Heart left ventricle (tissue), 16 donors: ENCODE measurements at regions of chr15 and their contacts with region 1.

Region 1: GRCh38 chr15:30023798-30024295 is 58.9 kb upstream of the GOLGA8J start:
- DNase-seq: no peak
- ATAC-seq: no peak
- H3K4me3 ChIP-seq: no peak overlapping the region
- H3K27ac ChIP-seq: no peak overlapping the region
- H3K4me1 ChIP-seq: no peaks in the 10 kb centered on the region
- H3K27me3 ChIP-seq: peaks cover 0 to 17% (median 0%) of the 10 kb centered on the region in 9 donors
- CTCF ChIP-seq: no peak
- POLR2A ChIP-seq: no peak

Region 2: DNA sequence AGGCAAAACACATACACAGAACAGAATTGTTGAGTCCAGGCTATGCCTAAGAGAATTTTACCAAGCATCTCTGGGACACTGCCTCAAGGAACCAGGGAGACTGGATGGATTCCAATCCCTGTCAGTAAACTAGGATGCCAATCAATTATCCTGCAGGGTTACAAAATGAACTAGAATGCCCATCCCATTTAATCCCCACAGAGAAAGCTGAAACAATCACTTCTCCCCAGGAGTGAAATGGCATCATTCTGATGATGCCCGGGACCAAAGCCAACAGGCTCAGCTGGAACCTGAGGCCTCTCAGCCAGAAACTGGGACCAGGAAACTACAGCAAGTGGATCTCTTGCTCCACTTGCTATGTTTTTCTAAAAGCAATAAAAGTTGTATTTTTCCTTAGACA is 71.6 kb before region 1 on chr15:
- intact Hi-C with region 1: loop called in 1 of 10 experiments (anchors 10 kb)
- DNase-seq: no peak
- ATAC-seq: no peak
- H3K4me3 ChIP-seq: no peak overlapping the region
- H3K27ac ChIP-seq: no peak overlapping the region
- H3K4me1 ChIP-seq: no peaks in the 10 kb centered on the region
- H3K27me3 ChIP-seq: no peaks in the 10 kb centered on the region
- CTCF ChIP-seq: no peak
- POLR2A ChIP-seq: no peak

Region 3: DNA sequence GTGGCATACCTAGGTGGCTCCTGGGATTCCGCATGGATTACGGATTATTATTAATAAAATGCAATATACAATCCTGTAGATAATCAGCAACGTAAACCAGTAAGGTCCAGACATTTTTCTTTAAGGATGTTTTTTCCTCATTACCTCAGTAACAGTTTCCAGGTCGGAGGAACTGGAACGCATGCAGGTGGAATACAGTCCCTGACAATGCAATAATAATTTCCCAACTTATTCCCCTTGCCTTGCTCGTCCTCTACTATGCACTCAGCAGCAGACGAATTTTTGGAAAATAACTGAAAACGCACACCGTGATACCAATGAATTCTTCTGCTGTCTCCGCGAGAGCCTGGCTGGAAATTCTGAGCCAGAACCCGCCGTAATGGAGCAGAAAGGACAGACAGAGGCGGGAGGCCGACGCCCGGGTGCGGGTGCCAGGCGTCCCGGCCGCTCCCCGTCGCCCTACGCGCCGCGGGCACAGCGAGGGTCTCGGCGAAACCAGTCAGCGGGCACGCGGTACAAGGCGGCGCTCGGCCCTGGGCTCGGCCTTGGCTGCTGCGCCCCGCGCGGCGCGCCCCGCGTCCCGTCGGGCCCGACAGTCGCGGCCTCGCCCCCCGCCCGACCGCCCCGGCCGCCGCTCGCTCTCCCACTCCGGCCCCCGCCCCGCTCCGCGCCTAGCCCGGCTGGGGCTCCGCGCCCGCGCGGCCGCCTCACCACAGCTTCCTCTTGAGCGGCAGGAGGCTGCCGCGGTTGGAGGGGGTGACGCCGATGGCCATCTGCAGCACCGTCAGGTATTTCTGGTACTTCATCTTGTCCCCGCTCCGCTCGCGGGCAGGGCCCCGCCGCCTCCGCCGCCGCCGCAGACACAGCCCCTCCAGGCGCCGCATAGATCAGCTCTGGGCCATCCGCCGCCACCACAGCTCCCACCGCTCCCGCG is 55.6 kb before region 1 on chr15:
- intact Hi-C with region 1: loop called in 2 of 10 experiments (anchors 10 kb)
- DNase-seq: no peak
- ATAC-seq: peak in 2 of 4 donors; percentile 20 to 47
- H3K4me3 ChIP-seq: peak overlapping the region in 11 of 12 donors; percentile 18 to 54 (median 44)
- H3K27ac ChIP-seq: no peak overlapping the region
- H3K4me1 ChIP-seq: peaks cover 0 to 9% (median 0%) of the 10 kb centered on the region in 12 donors
- H3K27me3 ChIP-seq: peaks cover 2 to 54% (median 16%) of the 10 kb centered on the region in 9 donors
- CTCF ChIP-seq: no peak
- POLR2A ChIP-seq: no peak

Region 4: DNA sequence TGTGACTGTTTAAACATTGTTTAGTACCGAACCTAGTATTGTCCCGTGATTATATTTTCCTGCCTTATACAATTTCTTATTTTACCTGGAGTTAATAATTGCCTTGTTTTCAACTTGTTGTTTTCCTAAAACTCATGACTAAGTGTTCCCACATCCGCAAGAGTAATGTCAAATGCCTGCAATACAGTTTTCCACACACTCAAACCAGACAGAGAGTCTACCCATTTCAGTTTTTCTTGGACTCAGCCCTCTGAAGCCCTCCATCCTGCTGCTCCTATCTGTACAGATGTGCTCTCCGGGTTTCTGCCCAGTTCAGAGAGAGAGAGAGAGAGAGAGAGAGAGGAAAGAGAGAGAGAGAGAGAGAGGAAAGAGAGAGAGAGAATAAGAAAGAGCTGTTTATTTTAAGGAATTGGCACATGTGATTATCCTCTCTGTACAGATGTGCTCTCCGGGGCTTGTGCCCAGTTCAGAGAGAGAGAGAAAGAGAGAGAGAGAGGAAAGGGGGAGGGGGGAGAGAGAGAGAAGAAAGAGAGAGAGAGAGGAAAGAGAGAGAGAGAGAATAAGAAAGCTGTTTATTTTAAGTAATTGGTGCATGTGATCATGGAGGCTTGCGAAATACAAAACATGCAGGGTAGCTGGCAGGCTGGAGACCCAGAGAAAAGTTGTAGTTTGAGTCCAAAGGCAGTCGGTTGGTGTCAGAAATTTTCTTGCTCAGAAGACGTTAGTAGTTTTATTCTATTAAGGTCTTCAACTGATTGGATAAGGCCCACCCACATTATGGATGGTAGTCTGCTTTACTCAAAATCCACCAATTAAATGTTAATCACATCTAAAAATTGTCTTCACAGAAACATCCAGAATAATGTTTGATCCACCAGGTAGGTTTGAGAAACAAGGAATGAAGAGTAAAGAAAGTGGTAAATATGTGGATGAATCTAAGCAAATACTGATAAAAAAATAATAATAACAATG is 45.1 kb before region 1 on chr15:
- intact Hi-C with region 1: loop called in 1 of 10 experiments (anchors 10 kb)
- DNase-seq: no peak
- ATAC-seq: peak; percentile 16 to 61 (median 32)
- H3K4me3 ChIP-seq: no peak overlapping the region
- H3K27ac ChIP-seq: no peak overlapping the region
- H3K4me1 ChIP-seq: no peaks in the 10 kb centered on the region
- H3K27me3 ChIP-seq: no peaks in the 10 kb centered on the region
- CTCF ChIP-seq: no peak
- POLR2A ChIP-seq: no peak

Region 5: DNA sequence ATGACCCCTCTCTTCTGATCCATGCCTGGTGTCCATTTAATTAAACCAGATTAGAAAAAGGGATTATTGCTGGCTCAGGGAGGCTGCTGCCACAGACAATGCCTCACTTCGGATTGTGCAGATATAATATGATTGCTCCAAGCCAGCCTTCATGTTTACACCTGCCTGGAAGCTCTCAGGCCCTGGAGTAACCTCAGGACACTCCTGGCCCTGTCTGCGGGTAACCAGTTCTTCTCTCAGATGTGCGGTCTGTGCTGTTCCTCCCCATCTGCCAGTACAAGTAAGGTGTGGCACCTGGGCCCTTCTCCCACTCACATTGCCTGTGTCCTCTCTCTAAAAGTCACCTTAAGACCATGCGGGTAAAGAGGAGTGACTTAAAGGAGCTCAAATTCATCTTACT is 50.1 kb after region 1 on chr15:
- intact Hi-C with region 1: no loop called
- DNase-seq: no peak
- ATAC-seq: no peak
- H3K4me3 ChIP-seq: no peak overlapping the region
- H3K27ac ChIP-seq: no peak overlapping the region
- H3K4me1 ChIP-seq: no peaks in the 10 kb centered on the region
- H3K27me3 ChIP-seq: peaks cover 0 to 6% (median 0%) of the 10 kb centered on the region in 9 donors
- CTCF ChIP-seq: no peak
- POLR2A ChIP-seq: no peak